Colonic mucosa (tissue), 4 donors: ENCODE measurements at regions of chr22 and their contacts with region 1.

Region 1: DNA sequence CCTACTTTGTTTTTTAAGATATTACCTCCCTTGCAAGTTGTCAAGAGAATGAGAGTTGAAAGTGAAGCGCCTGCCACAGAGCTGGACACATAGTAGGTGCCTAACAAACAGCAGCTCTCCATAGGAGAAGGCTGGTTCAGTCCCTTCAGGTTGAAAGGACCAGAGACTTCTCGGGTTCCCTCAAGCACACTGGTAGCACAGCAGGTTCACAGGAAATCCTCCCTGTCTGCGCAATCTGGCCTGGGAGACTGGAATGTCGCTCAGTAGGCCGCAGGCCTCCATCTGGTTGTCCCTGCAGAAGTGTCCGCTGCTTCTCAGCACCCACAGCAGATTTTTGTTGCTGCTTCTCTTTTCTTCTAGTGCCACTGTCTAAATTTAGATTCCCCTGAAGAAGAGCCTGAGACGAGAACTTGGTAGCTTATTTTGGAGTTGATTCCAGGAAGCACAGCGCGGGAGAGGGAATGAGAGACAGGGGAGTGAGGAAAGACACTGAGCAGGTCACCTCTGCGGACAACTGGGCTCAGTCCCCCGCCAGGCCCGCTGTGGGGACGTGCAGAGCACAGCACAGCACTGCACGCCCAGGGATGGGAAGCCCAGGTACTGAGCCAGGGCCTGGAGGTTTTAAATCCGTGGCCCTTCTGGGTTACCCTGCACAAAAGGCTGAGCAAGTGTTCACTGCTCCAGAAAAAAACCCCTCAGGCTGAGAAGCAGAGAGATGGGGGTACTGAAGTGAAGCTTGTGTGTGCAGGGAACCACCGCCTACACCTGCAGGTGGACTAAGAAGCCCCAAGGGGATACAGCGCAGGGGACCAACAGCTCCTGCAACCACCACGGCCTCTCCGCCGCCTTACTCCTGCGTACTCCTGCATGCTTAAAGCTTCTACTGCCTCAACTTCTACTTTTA is 31.6 kb downstream of the RBX1 start:
- DNase-seq: no peak
- H3K4me3 ChIP-seq: no peak overlapping the region
- H3K27ac ChIP-seq: no peak overlapping the region
- H3K4me1 ChIP-seq: no peaks in the 10 kb centered on the region
- H3K27me3 ChIP-seq: no peaks in the 10 kb centered on the region
- CTCF ChIP-seq: no peak

Region 2: GRCh38 chr22:40487663-40488249 is 495.0 kb before region 1 on chr22:
- intact Hi-C with region 1: no loop called
- DNase-seq: no peak
- H3K4me3 ChIP-seq: no peak overlapping the region
- H3K27ac ChIP-seq: no peak overlapping the region
- H3K4me1 ChIP-seq: no peaks in the 10 kb centered on the region
- H3K27me3 ChIP-seq: no peaks in the 10 kb centered on the region
- CTCF ChIP-seq: peak; percentile 76

Region 3: DNA sequence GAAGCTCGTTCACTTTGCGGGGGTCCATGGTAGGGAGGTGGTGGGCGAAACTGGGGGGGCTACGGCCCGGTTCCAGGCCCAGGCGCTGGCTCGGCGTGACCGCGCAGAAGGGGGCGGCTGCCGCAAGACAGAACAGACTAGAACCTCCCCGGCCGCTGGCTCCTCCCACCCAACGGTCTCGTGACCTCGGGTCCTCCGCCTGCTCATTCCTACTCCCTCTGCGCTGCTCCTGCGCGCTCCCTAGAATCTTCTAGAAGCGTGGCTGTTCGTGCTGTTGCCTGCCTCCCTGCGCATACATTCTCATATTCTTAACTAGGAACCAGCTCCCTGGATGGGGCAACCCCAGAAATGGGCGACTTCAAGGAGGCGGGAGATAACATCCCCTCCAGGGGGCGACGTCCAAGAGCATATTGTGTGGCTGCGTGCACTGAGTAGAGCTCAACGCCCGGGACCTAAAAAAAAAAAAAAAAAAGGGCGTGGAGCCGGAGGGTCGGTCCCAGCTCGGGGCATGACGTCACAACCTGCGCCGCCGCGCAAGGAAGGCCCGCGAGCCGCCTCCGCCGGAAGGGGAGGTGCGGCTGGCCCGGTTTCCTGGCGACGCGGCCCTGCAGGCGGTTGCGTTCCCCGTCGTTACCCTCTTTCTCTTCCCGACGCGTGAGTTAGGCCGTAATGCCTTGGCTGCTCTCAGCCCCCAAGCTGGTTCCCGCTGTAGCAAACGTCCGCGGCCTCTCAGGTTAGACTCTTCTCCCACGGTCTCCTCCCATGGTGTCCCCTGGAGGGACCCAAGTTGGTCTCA is 126.0 kb before region 1 on chr22 and contains the starts of genes ST13 and XPNPEP3:
- intact Hi-C with region 1: no loop called
- DNase-seq: peak; percentile 99
- H3K4me3 ChIP-seq: peak within 1 kb of the TSS; percentile 85
- H3K27ac ChIP-seq: peak within 1 kb of the TSS; percentile 92
- H3K4me1 ChIP-seq: peaks cover 6% of the 10 kb centered on the region
- H3K27me3 ChIP-seq: no peaks in the 10 kb centered on the region
- CTCF ChIP-seq: no peak
- total RNA-seq, gene ST13: 193 to 238 TPM
- total RNA-seq, gene XPNPEP3: 12.8 to 22.0 TPM

Region 4: GRCh38 chr22:40922484-40923303 is 60.0 kb before region 1 on chr22:
- intact Hi-C with region 1: no loop called
- DNase-seq: no peak
- H3K4me3 ChIP-seq: no peak overlapping the region
- H3K27ac ChIP-seq: no peak overlapping the region
- H3K4me1 ChIP-seq: no peaks in the 10 kb centered on the region
- H3K27me3 ChIP-seq: no peaks in the 10 kb centered on the region
- CTCF ChIP-seq: peak; percentile 72

Region 5: GRCh38 chr22:41352051-41352450 is 369.3 kb after region 1 on chr22:
- intact Hi-C with region 1: loop called (anchors 5 kb)
- DNase-seq: no peak
- H3K4me3 ChIP-seq: no peak overlapping the region
- H3K27ac ChIP-seq: no peak overlapping the region
- H3K4me1 ChIP-seq: no peaks in the 10 kb centered on the region
- H3K27me3 ChIP-seq: no peaks in the 10 kb centered on the region
- CTCF ChIP-seq: no peak